CD8-positive, alpha-beta memory T cell (primary cell): ENCODE measurements at regions of chr6 and their contacts with region 1.

Region 1: DNA sequence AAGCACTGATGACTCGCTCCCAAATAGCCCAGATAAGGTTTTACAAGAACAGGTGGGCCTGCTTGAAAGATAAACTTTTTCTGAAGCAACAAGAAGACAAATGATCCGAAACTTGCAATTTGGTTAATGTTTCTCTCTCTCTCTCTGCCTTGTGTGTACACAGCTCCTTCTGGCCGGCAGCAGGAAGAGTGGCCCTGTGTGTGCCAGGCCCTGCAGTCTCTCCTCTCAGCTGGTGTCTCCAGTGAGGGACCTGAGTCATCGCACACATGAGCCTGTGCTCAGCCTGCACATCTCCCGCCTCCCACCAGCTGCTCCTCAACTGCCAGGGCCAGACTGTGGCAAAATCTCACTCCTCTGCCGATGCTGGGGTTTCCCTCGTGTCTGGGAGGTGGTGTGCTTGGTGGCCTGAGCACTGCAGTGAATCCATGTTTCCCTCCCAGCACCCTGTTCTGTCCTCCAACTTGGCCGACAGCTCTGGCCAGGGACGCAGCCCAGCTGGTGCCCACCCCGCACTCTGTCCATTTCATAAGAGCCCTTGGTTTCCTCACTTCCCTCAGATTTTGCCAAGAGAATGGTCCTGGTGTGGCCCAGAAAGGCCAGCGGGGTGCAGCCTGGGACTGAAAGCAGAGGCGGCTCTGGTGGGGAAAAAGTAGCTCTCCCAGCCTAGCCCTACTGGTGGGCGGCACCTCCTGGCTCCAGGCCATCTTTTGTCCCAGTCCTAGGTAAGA is 49.4 kb downstream of the ERMARD start:
- DNase-seq: no peak
- H3K4me3 ChIP-seq: no peak overlapping the region
- H3K4me3 Mint-ChIP-seq: no peak overlapping the region
- H3K27ac ChIP-seq: no peak overlapping the region
- H3K27ac Mint-ChIP-seq: no peak overlapping the region
- H3K4me1 ChIP-seq: peaks cover 31% of the 10 kb centered on the region
- H3K4me1 Mint-ChIP-seq: peaks cover 31 to 32% (median 31%) of the 10 kb centered on the region in 3 donors
- H3K27me3 ChIP-seq: no peaks in the 10 kb centered on the region
- H3K27me3 Mint-ChIP-seq: peaks cover 11 to 34% of the 10 kb centered on the region in 2 donors

Region 2: DNA sequence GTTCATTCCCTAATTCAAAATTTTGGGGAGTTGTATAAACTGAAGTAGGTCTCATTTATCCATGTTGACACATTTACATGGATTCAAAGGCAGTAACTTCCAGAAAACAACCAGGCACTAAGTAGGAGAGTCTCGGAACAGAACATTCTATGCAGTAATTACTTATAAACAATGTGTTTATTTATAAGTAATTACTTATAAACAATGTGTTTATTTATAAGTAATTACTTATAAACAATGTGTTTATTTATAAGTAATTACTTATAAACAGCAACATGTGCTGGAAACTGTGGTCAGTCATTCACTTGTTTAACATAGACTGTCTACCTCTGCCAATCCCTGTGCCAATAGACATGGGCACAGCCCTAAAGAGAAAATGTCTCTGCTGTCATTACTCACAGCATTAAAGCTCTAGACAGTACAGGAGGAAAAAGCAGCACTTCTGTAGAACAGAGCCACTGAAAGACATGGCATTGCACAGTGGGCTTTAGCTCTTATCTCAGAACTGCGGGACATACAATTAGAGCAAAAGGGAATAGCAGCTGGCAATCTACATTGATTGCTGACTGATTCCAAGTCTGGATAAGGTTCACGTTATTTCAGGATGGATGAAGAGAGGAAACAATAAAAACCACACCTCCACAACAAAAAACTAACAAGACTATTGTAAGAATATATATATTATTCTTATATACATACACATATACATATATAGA is 287.2 kb before region 1 on chr6:
- CTCF ChIA-PET with region 1: no interaction called
- POLR2A ChIA-PET with region 1: no interaction called
- DNase-seq: no peak
- H3K4me3 ChIP-seq: no peak overlapping the region
- H3K4me3 Mint-ChIP-seq: no peak overlapping the region
- H3K27ac ChIP-seq: no peak overlapping the region
- H3K27ac Mint-ChIP-seq: no peak overlapping the region
- H3K4me1 ChIP-seq: no peaks in the 10 kb centered on the region
- H3K4me1 Mint-ChIP-seq: no peaks in the 10 kb centered on the region
- H3K27me3 ChIP-seq: no peaks in the 10 kb centered on the region
- H3K27me3 Mint-ChIP-seq: no peaks in the 10 kb centered on the region

Region 3: GRCh38 chr6:169789982-169790927 is 10.6 kb before region 1 on chr6:
- CTCF ChIA-PET with region 1: interaction called, 60 read pairs
- POLR2A ChIA-PET with region 1: interaction called, 3 read pairs
- DNase-seq: peak; percentile 56 to 76 (median 63)
- H3K4me3 ChIP-seq: peak overlapping the region; percentile 81
- H3K4me3 Mint-ChIP-seq: peak overlapping the region; percentile 81 to 94 (median 90)
- H3K27ac ChIP-seq: no peak overlapping the region
- H3K27ac Mint-ChIP-seq: peak overlapping the region in 4 of 8 donors; percentile 3 to 63 (median 54)
- H3K4me1 ChIP-seq: peaks cover 10% of the 10 kb centered on the region
- H3K4me1 Mint-ChIP-seq: peaks cover 11 to 22% (median 17%) of the 10 kb centered on the region in 3 donors
- H3K27me3 ChIP-seq: no peaks in the 10 kb centered on the region
- H3K27me3 Mint-ChIP-seq: peaks cover 16 to 41% of the 10 kb centered on the region in 2 donors

Region 4: DNA sequence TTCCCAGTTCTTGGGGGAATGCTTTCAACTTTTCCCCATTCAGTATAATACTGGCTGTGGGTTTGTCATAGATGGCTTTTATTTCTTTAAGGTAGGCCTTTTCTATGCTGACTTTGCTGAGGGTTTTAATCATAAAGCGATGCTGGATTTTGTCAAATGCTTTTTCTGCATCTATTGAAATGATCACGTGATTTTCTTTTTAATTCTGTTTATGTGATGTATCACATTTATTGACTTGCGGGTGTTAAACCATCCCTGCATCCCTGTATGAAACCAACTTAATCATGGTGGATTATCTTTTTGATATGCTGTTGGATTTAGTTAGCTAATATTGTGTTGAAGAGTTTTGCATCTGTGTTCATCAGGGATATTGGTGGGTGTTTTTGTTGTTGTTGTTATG is 16.1 kb after region 1 on chr6:
- CTCF ChIA-PET with region 1: no interaction called
- POLR2A ChIA-PET with region 1: interaction called, 10 read pairs
- DNase-seq: no peak
- H3K4me3 ChIP-seq: no peak overlapping the region
- H3K4me3 Mint-ChIP-seq: no peak overlapping the region
- H3K27ac ChIP-seq: no peak overlapping the region
- H3K27ac Mint-ChIP-seq: no peak overlapping the region
- H3K4me1 ChIP-seq: no peaks in the 10 kb centered on the region
- H3K4me1 Mint-ChIP-seq: no peaks in the 10 kb centered on the region
- H3K27me3 ChIP-seq: no peaks in the 10 kb centered on the region
- H3K27me3 Mint-ChIP-seq: peaks cover 4 to 62% of the 10 kb centered on the region in 2 donors

Region 5: GRCh38 chr6:169831450-169832246 is 30.8 kb after region 1 on chr6:
- CTCF ChIA-PET with region 1: interaction called, 11 read pairs
- POLR2A ChIA-PET with region 1: no interaction called
- DNase-seq: peak; percentile 49 to 72 (median 53)
- H3K4me3 ChIP-seq: no peak overlapping the region
- H3K4me3 Mint-ChIP-seq: no peak overlapping the region
- H3K27ac ChIP-seq: no peak overlapping the region
- H3K27ac Mint-ChIP-seq: no peak overlapping the region
- H3K4me1 ChIP-seq: no peaks in the 10 kb centered on the region
- H3K4me1 Mint-ChIP-seq: peaks cover 2 to 5% (median 3%) of the 10 kb centered on the region in 3 donors
- H3K27me3 ChIP-seq: peaks cover 14% of the 10 kb centered on the region
- H3K27me3 Mint-ChIP-seq: peaks cover 16 to 59% of the 10 kb centered on the region in 2 donors